ENCODE measurements at regions of chr10 and their contacts with region 1.

Region 1: GRCh38 chr10:3972460-3973301 is 187.7 kb upstream of the KLF6 start:
- DNase-seq: peak in 4 of 5 donors; percentile 26 to 62 (median 44)
- H3K4me3 ChIP-seq: no peak overlapping the region
- H3K4me3 Mint-ChIP-seq: peak overlapping the region; percentile 72 to 95 (median 84)
- H3K27ac ChIP-seq: peak overlapping the region; percentile 70
- H3K27ac Mint-ChIP-seq: peak overlapping the region; percentile 88 to 98 (median 96)
- H3K4me1 ChIP-seq: peaks cover 85% of the 10 kb centered on the region
- H3K4me1 Mint-ChIP-seq: peaks cover 44 to 61% (median 53%) of the 10 kb centered on the region in 4 donors
- H3K27me3 ChIP-seq: no peaks in the 10 kb centered on the region
- H3K27me3 Mint-ChIP-seq: no peaks in the 10 kb centered on the region

Region 2: GRCh38 chr10:3811291-3811870 is 161.3 kb before region 1 on chr10:
- CTCF ChIA-PET with region 1: no interaction called
- POLR2A ChIA-PET with region 1: interaction called, 24 read pairs
- intact Hi-C with region 1: no loop called
- DNase-seq: peak; percentile 49 to 79 (median 66)
- H3K4me3 ChIP-seq: peak overlapping the region; percentile 1 to 39
- H3K4me3 Mint-ChIP-seq: peak overlapping the region; percentile 76 to 87 (median 82)
- H3K27ac ChIP-seq: peak overlapping the region; percentile 99
- H3K27ac Mint-ChIP-seq: no peak overlapping the region
- H3K4me1 ChIP-seq: peaks cover 79% of the 10 kb centered on the region
- H3K4me1 Mint-ChIP-seq: peaks cover 18 to 89% (median 66%) of the 10 kb centered on the region in 4 donors
- H3K27me3 ChIP-seq: no peaks in the 10 kb centered on the region
- H3K27me3 Mint-ChIP-seq: no peaks in the 10 kb centered on the region

Region 3: GRCh38 chr10:3955493-3955892 is 17.2 kb before region 1 on chr10:
- CTCF ChIA-PET with region 1: interaction called, 6 read pairs
- POLR2A ChIA-PET with region 1: interaction called, 111 read pairs
- intact Hi-C with region 1: loop called (anchors 2 kb)
- DNase-seq: no peak
- H3K4me3 ChIP-seq: no peak overlapping the region
- H3K4me3 Mint-ChIP-seq: no peak overlapping the region
- H3K27ac ChIP-seq: no peak overlapping the region
- H3K27ac Mint-ChIP-seq: no peak overlapping the region
- H3K4me1 ChIP-seq: peaks cover 20% of the 10 kb centered on the region
- H3K4me1 Mint-ChIP-seq: peaks cover 14 to 33% (median 20%) of the 10 kb centered on the region in 4 donors
- H3K27me3 ChIP-seq: no peaks in the 10 kb centered on the region
- H3K27me3 Mint-ChIP-seq: no peaks in the 10 kb centered on the region

Region 4: GRCh38 chr10:3961082-3961481 is 11.6 kb before region 1 on chr10:
- CTCF ChIA-PET with region 1: interaction called, 5 read pairs
- POLR2A ChIA-PET with region 1: interaction called, 59 read pairs
- intact Hi-C with region 1: loop called (anchors 1 kb)
- DNase-seq: peak; percentile 57 to 79 (median 71)
- H3K4me3 ChIP-seq: no peak overlapping the region
- H3K4me3 Mint-ChIP-seq: peak overlapping the region; percentile 12 to 82 (median 58)
- H3K27ac ChIP-seq: peak overlapping the region; percentile 19
- H3K27ac Mint-ChIP-seq: peak overlapping the region; percentile 81 to 90 (median 88)
- H3K4me1 ChIP-seq: peaks cover 26% of the 10 kb centered on the region
- H3K4me1 Mint-ChIP-seq: peaks cover 26 to 51% (median 28%) of the 10 kb centered on the region in 4 donors
- H3K27me3 ChIP-seq: no peaks in the 10 kb centered on the region
- H3K27me3 Mint-ChIP-seq: no peaks in the 10 kb centered on the region

Region 5: GRCh38 chr10:4073912-4074311 is 101.2 kb after region 1 on chr10:
- CTCF ChIA-PET with region 1: interaction called, 6 read pairs
- POLR2A ChIA-PET with region 1: interaction called, 5 read pairs
- intact Hi-C with region 1: loop called (anchors 1 kb)
- DNase-seq: no peak
- H3K4me3 ChIP-seq: no peak overlapping the region
- H3K4me3 Mint-ChIP-seq: peak overlapping the region in 6 of 8 donors; percentile 20 to 91 (median 86)
- H3K27ac ChIP-seq: no peak overlapping the region
- H3K27ac Mint-ChIP-seq: peak overlapping the region; percentile 87 to 97 (median 93)
- H3K4me1 ChIP-seq: peaks cover 62% of the 10 kb centered on the region
- H3K4me1 Mint-ChIP-seq: peaks cover 33 to 54% (median 43%) of the 10 kb centered on the region in 4 donors
- H3K27me3 ChIP-seq: no peaks in the 10 kb centered on the region
- H3K27me3 Mint-ChIP-seq: peaks cover 0 to 2% of the 10 kb centered on the region in 2 donors

Region 6: DNA sequence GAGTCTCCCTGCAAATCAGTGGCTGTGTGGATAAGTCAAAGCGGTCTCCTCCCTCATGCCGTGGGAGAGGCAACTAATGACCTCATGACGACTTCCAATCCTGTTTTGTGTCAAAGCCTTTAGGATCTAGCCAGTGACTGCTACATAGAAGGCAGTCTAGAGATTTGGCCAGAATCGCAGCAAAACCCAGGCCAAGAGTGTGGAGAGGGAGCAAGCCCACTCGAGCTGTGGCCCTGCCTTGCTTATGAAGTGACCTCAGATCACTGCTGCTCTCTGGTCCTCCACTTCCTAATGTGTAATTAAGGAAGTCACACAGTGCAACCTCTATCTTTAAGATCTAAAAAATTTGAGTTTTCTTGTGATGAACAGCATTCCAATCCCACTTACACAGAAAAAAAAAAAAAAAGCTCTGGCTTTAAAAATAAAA is 109.0 kb after region 1 on chr10:
- CTCF ChIA-PET with region 1: no interaction called
- POLR2A ChIA-PET with region 1: interaction called, 26 read pairs
- intact Hi-C with region 1: no loop called
- DNase-seq: no peak
- H3K4me3 ChIP-seq: no peak overlapping the region
- H3K4me3 Mint-ChIP-seq: peak overlapping the region in 7 of 8 donors; percentile 0 to 68 (median 41)
- H3K27ac ChIP-seq: no peak overlapping the region
- H3K27ac Mint-ChIP-seq: peak overlapping the region; percentile 69 to 90 (median 88)
- H3K4me1 ChIP-seq: peaks cover 61% of the 10 kb centered on the region
- H3K4me1 Mint-ChIP-seq: peaks cover 42 to 59% (median 52%) of the 10 kb centered on the region in 4 donors
- H3K27me3 ChIP-seq: no peaks in the 10 kb centered on the region
- H3K27me3 Mint-ChIP-seq: no peaks in the 10 kb centered on the region